ENCODE measurements at regions of chr1 and their contacts with region 1.

Region 1: DNA sequence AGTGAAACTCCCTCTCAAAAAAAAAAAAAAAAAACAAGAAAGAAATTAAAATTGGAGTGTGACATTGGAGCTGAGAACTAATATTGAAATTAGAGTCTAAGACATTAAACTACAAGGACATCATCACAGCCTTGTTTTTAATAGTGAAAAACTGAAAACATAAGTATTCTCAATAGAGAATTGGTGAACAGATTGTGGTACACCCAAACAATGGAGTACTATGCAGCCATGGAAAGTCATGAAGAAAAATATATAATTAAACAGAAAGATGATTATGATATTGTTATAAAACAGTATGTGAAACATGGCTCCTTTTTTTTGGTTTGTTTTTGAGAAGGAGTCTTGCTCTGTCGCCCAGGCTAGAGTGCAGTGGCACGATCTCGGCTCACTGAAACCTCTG is 43.4 kb downstream of the NCMAP start:
- DNase-seq: no peak
- H3K4me3 ChIP-seq: no peak overlapping the region
- CTCF ChIP-seq: no peak
- POLR2A ChIP-seq: no peak

Region 2: DNA sequence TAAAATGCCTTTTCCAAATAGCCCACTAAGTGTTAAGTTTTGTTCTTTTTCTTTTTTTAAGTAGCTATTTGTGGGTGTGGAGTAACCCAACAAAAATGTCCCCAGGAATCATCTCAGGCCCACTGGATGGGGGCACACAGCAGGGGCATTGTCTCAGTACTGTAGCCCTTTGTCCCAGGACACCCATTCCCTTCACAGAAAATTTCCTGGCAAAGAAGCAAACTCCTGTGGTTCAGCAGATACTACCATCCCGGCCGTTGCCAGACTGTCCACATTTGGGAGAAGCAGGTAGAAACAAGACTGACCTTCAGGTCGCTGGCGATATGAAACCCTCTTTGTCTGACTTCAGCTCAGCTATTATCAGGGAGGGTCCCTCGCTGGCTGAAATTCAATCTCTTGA is 20.1 kb after region 1 on chr1:
- intact Hi-C with region 1: loop called (anchors 2 kb)
- DNase-seq: no peak
- H3K4me3 ChIP-seq: no peak overlapping the region
- CTCF ChIP-seq: no peak
- POLR2A ChIP-seq: no peak

Region 3: DNA sequence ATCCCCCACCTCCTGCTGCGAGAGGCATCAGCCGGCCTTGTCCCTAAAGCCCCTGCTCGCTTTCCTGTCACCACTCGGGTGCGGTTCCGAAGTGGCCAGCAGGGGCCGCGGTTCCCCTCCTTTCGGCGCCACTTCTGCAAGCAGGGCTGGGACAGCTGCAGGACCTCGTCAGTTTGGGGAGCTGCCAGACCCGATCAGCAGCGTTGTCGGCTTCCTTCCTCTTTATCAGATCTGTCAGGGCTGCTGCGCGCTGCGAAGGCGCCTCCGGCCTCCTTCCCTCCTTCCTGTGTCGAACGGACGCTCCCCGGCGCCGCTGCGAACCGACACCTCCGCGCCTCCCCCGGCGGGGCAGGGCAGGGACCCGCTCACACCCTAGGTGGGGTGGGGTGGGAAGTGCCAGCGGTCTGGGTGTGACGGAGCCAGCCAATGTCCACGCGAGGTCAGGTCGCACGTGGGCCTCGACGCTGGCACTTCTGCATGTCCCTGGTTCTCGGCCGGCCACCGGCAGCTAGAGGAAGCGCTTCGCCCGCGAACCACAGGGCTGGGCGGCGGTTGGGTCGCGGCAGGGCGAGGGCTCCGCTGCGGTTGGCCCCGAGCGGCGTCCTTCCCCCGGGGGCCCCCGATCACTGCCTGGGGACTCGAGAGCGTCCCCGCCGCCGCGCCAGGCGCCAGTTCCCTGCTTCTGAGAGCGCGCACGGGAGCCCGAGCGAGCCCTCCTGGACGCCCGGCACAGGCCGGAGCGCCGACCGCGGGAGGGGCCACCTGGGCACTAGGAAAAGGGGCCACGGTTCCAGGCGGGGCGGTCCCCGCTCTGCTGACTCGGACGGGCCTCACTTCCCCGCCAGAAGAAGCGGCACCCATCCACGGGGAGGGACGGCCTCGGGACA is 249.0 kb after region 1 on chr1:
- intact Hi-C with region 1: no loop called
- DNase-seq: peak; percentile 91 to 98
- H3K4me3 ChIP-seq: peak overlapping the region; percentile 23
- CTCF ChIP-seq: peak in 2 of 3 donors; percentile 27 to 76
- POLR2A ChIP-seq: no peak

Region 4: GRCh38 chr1:25054526-25055323 is 455.5 kb after region 1 on chr1:
- intact Hi-C with region 1: no loop called
- DNase-seq: no peak
- H3K4me3 ChIP-seq: no peak overlapping the region
- CTCF ChIP-seq: no peak
- POLR2A ChIP-seq: no peak